ENCODE measurements at regions of chr17 and their contacts with region 1.

Region 1: DNA sequence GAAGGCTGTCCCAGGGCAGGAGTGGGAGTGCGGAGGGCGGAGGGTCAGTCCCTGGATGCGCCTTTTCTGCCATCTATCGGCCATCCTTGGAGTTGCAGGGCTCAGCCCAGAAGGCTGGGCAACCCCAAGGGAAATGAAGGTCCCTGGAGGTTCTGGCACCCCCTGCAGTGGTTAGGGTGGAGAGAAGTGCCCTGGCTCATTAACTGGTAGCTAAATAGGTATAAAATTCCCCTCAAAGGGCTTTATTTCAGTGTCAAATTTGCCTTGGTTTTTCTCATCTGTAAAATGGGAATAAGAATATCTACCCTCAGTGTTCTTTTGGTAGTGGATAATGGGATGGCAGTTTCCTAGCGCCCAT is 22.4 kb downstream of the C17orf75 start:
- DNase-seq: peak; percentile 84
- ATAC-seq: peak; percentile 91
- H3K4me3 Mint-ChIP-seq: peak overlapping the region; percentile 73
- H3K27ac Mint-ChIP-seq: peak overlapping the region; percentile 66
- H3K4me1 Mint-ChIP-seq: peaks cover 41% of the 10 kb centered on the region
- H3K27me3 Mint-ChIP-seq: peaks cover 19% of the 10 kb centered on the region

Region 2: DNA sequence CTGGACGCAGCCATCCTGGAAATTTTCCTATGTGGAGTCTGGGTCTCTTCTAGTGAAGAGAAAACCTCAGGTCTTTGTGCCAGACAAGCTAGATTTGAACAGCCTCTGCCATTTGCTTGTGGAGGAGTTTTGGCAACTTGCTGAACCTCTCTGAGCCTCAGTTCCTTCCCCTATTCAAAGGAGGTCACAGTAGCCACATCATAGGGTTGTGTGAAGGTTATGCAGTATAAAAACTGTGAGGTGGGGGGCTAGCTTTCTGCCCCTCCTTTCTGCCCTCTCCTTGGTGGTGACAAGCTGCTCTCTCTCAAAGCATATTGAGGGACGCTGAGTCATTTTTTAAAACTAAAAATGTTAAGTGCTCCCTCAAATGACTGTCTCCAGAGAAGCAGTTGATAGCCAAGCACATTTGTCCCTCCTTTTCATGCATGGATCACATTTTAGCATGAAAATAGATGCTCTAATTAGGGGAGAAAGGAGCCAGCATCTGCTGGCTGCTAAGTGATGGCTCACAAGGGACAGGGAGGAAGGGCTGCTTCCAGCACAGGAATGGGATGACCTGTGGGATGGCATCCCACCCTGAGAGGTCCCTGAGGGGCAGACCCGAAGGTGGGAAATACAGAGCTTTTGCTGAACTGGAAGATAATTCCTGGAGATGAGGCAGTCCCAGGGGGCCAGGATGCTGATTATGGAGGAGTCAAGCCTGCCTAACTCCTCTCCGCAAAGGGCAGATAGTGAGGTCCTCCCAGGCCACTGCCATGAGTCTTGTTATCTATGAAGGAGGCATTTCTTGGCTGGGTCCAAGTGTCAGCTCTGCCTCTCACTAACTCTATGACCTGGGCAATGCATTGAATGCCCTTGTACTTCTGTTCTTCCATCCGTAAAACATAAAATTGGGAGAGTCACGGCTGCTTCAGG is 709.3 kb before region 1 on chr17:
- CTCF ChIA-PET with region 1: no interaction called
- POLR2A ChIA-PET with region 1: no interaction called
- DNase-seq: no peak
- ATAC-seq: no peak
- H3K4me3 Mint-ChIP-seq: no peak overlapping the region
- H3K27ac Mint-ChIP-seq: no peak overlapping the region
- H3K4me1 Mint-ChIP-seq: no peaks in the 10 kb centered on the region
- H3K27me3 Mint-ChIP-seq: peaks cover 2% of the 10 kb centered on the region

Region 3: DNA sequence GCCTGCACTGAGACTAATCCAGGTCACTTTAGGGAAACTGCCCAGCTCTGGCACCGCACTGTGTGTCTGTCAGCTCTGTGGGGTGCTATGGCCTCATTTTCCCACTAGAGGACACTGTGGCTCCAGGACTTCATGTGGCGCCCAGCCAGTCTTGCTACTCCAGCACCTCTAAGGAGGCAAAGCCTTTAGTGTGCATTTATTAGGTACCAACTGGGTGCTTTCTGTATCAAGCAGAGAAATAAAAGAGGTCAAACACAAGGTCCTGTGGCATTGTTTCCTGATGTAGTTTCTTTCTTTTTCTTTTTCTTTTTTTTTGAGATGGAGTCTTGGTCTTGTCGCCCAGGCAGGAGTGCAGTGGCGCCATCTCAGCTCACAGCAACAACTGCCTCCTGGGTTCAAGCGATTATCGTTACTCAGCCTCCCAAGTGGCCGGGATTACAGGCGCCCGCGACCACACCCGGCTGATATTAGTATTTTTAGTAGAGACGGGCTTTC is 66.4 kb before region 1 on chr17:
- CTCF ChIA-PET with region 1: interaction called, 17 read pairs
- POLR2A ChIA-PET with region 1: no interaction called
- DNase-seq: peak; percentile 87
- ATAC-seq: peak; percentile 99
- H3K4me3 Mint-ChIP-seq: no peak overlapping the region
- H3K27ac Mint-ChIP-seq: no peak overlapping the region
- H3K4me1 Mint-ChIP-seq: peaks cover 2% of the 10 kb centered on the region
- H3K27me3 Mint-ChIP-seq: peaks cover 16% of the 10 kb centered on the region

Region 4: GRCh38 chr17:32258383-32259140 is 61.0 kb before region 1 on chr17:
- CTCF ChIA-PET with region 1: interaction called, 17 read pairs
- POLR2A ChIA-PET with region 1: no interaction called
- DNase-seq: no peak
- ATAC-seq: no peak
- H3K4me3 Mint-ChIP-seq: no peak overlapping the region
- H3K27ac Mint-ChIP-seq: no peak overlapping the region
- H3K4me1 Mint-ChIP-seq: no peaks in the 10 kb centered on the region
- H3K27me3 Mint-ChIP-seq: peaks cover 41% of the 10 kb centered on the region

Region 5: GRCh38 chr17:32335687-32336086 is 16.2 kb after region 1 on chr17:
- CTCF ChIA-PET with region 1: interaction called, 69 read pairs
- POLR2A ChIA-PET with region 1: no interaction called
- DNase-seq: no peak
- ATAC-seq: no peak
- H3K4me3 Mint-ChIP-seq: no peak overlapping the region
- H3K27ac Mint-ChIP-seq: peak overlapping the region; percentile 12
- H3K4me1 Mint-ChIP-seq: peaks cover 46% of the 10 kb centered on the region
- H3K27me3 Mint-ChIP-seq: no peaks in the 10 kb centered on the region

Measured in activated CD8-positive, alpha-beta T cell treated with anti-CD3 and anti-CD28 coated beads, Interleukin-2, amount 10 ng/mL, durations not matched to agents 7 days and 5 days (primary cell).